ENCODE measurements at regions of chr7 and their contacts with region 1.

Region 1: DNA sequence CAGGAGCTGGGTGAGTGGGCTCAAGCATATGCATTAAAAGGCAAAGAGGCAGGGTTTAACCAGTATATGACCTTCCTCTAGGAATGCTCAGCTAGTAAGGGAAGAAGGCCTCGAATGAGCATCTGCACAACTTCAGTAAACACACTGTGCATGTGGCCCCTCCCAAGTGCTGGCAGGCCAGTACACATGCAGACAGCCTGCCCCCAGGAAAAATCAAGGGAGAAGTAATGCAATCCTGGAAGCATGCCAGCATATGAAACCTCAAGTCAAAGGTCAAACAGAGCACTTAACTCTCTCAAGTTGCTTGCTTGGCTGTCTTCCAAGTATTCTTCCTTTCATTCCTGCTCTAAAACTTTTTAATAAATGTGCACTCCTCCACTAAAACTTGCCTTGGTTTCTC is 208.4 kb downstream of the ACTR3B start:
- DNase-seq: no peak
- ATAC-seq: no peak
- H3K4me3 ChIP-seq: no peak overlapping the region
- H3K4me3 Mint-ChIP-seq: no peak overlapping the region
- H3K27ac ChIP-seq: no peak overlapping the region
- H3K27ac Mint-ChIP-seq: no peak overlapping the region
- H3K4me1 ChIP-seq: no peaks in the 10 kb centered on the region
- H3K4me1 Mint-ChIP-seq: no peaks in the 10 kb centered on the region
- H3K27me3 ChIP-seq: no peaks in the 10 kb centered on the region
- H3K27me3 Mint-ChIP-seq: peaks cover 5 to 16% of the 10 kb centered on the region in 2 donors

Region 2: GRCh38 chr7:152924238-152924637 is 43.7 kb before region 1 on chr7:
- CTCF ChIA-PET with region 1: no interaction called
- POLR2A ChIA-PET with region 1: interaction called in 1 of 2 experiments, 10 read pairs
- DNase-seq: no peak
- ATAC-seq: no peak
- H3K4me3 ChIP-seq: no peak overlapping the region
- H3K4me3 Mint-ChIP-seq: no peak overlapping the region
- H3K27ac ChIP-seq: no peak overlapping the region
- H3K27ac Mint-ChIP-seq: no peak overlapping the region
- H3K4me1 ChIP-seq: no peaks in the 10 kb centered on the region
- H3K4me1 Mint-ChIP-seq: peaks cover 0 to 6% (median 2%) of the 10 kb centered on the region in 3 donors
- H3K27me3 ChIP-seq: peaks cover 6 to 43% of the 10 kb centered on the region in 2 experiments
- H3K27me3 Mint-ChIP-seq: peaks cover 26 to 42% of the 10 kb centered on the region in 2 donors